ENCODE measurements at regions of chr20 and their contacts with region 1.

Region 1: DNA sequence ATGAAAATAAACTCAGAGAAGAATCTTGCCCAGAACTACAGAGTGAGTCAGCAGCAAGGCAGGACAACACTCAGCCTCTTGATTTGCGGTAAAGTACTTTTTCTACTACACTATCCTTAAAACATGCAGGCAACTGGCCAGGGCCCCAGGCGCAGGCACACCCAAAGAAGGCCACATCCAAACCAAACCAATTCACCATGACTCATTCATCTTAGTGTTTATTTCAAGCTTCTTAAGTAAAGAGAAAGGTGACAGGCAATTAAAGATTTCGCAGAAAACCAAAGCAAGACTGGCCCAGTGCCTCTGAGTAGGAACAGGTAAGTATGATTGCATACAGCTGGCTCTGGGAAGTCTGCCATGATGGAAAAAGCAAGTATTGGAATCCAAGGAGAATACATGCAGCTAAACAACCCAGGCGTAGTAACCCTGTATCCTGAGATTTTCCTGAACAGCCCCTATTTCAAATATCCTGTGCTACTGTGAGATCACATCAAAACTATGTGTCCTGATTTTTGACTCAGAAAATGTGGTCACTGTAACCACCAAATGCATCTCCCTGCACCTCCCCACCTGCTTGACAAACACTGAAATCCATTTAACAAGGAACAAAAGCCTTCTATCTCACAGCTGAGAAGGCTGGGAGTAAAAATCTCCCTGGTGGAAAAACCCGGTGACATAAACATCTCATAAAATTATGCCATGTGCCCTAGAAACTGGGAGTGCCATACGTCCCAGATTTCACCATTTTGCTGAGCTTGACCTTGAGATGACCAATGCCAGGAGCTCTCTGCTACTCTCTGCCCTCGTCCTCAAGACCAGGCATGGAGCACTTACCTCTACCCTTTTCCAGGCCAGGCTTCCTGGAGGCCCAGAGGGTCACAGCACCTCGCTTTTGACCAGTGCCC is 12.4 kb downstream of the WFDC3 start:
- DNase-seq: peak; percentile 99
- H3K4me3 ChIP-seq: no peak overlapping the region; the same call in 1 of the 2 replicates
- H3K27ac ChIP-seq: peak overlapping the region; percentile 98
- H3K27me3 ChIP-seq: peaks cover 7% of the 10 kb centered on the region
- CTCF ChIP-seq: no peak

Region 2: GRCh38 chr20:44137210-44137801 is 1642.0 kb before region 1 on chr20:
- CTCF ChIA-PET with region 1: no interaction called
- POLR2A ChIA-PET with region 1: interaction called, 10 read pairs
- DNase-seq: peak; percentile 21
- H3K4me3 ChIP-seq: no peak overlapping the region
- H3K27ac ChIP-seq: peak overlapping the region; percentile 57
- H3K27me3 ChIP-seq: peaks cover 5% of the 10 kb centered on the region
- CTCF ChIP-seq: no peak

Region 3: GRCh38 chr20:44837946-44838345 is 941.3 kb before region 1 on chr20:
- CTCF ChIA-PET with region 1: no interaction called
- POLR2A ChIA-PET with region 1: no interaction called
- DNase-seq: no peak
- H3K4me3 ChIP-seq: no peak overlapping the region
- H3K27ac ChIP-seq: no peak overlapping the region
- H3K27me3 ChIP-seq: peaks cover 19% of the 10 kb centered on the region
- CTCF ChIP-seq: no peak

Region 4: GRCh38 chr20:45341939-45342859 is 437.1 kb before region 1 on chr20:
- CTCF ChIA-PET with region 1: no interaction called
- POLR2A ChIA-PET with region 1: interaction called, 10 read pairs
- DNase-seq: no peak
- H3K4me3 ChIP-seq: peak overlapping the region; percentile 97
- H3K27ac ChIP-seq: peak overlapping the region; percentile 85
- H3K27me3 ChIP-seq: no peaks in the 10 kb centered on the region
- CTCF ChIP-seq: no peak

Region 5: GRCh38 chr20:45592574-45593189 is 186.6 kb before region 1 on chr20:
- CTCF ChIA-PET with region 1: no interaction called
- POLR2A ChIA-PET with region 1: no interaction called
- DNase-seq: no peak
- H3K4me3 ChIP-seq: no peak overlapping the region
- H3K27ac ChIP-seq: no peak overlapping the region
- H3K27me3 ChIP-seq: peaks cover 4% of the 10 kb centered on the region
- CTCF ChIP-seq: peak; percentile 58

Region 6: GRCh38 chr20:45798935-45799642 is 19.8 kb after region 1 on chr20:
- CTCF ChIA-PET with region 1: interaction called, 13 read pairs
- POLR2A ChIA-PET with region 1: no interaction called
- DNase-seq: no peak
- H3K4me3 ChIP-seq: no peak overlapping the region
- H3K27ac ChIP-seq: no peak overlapping the region
- H3K27me3 ChIP-seq: no peaks in the 10 kb centered on the region
- CTCF ChIP-seq: peak; percentile 79

Region 7: GRCh38 chr20:46562373-46563169 is 783.3 kb after region 1 on chr20:
- CTCF ChIA-PET with region 1: no interaction called
- POLR2A ChIA-PET with region 1: interaction called, 15 read pairs
- DNase-seq: no peak
- H3K4me3 ChIP-seq: peak overlapping the region; percentile 41
- H3K27ac ChIP-seq: no peak overlapping the region
- H3K27me3 ChIP-seq: no peaks in the 10 kb centered on the region
- CTCF ChIP-seq: peak; percentile 83